Naive thymus-derived CD4-positive, alpha-beta T cell (primary cell): ENCODE measurements at regions of chr3 and their contacts with region 1.

Region 1: DNA sequence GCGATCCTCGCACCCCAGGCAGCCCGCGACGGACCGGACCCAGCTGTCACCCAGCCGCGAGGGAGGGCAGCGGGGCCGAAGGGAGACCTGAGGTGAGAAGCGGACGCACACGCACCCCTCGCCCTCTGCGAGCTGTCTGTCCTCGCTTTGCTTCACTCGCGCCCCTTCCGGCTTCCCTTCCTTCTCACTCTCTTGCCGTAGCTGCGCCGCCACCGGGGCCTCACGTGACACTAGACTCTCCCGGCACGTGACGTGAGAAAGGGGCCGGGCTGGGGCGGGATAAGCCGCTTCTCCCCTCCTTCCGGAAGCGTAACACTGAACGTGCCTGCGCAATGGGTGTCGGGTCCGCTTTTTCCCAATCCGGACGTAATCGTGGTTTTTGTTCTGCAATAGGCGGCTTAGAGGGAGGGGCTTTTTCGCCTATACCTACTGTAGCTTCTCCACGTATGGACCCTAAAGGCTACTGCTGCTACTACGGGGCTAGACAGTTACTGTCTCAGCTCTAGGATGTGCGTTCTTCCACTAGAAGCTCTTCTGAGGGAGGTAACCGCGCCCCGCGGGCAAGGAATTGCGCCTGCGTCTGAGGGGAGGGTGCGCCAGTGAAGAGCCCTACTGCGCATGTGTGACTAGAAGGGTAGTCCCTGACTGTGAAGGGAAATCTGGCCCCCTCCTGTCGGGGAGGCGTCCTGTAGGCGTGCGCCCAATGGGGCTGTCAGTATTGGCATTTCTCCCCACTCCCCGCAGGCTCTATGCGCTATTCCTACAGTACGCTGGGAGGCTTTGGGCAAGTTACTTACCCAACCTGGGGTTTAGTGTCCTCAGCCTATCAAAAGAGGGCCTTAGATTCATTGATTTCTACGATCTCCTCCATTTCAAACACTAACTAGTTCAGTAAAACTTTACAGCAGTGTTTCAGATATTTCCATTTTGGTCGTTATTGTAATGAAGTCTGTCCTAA is at the starts of genes ATG3 and SLC35A5:
- DNase-seq: peak; percentile 97 to 100 (median 99)
- ATAC-seq: peak; percentile 88
- H3K4me3 ChIP-seq: peak within 1 kb of the TSS; percentile 86
- H3K4me3 Mint-ChIP-seq: peak within 1 kb of the TSS; percentile 93 to 100 (median 98)
- H3K27ac ChIP-seq: peak within 1 kb of the TSS; percentile 91
- H3K27ac Mint-ChIP-seq: peak within 1 kb of the TSS; percentile 96 to 100 (median 99)
- H3K4me1 ChIP-seq: peaks cover 13 to 15% of the 10 kb centered on the region in 2 donors
- H3K4me1 Mint-ChIP-seq: peaks cover 25 to 73% (median 58%) of the 10 kb centered on the region in 7 donors
- H3K27me3 ChIP-seq: no peaks in the 10 kb centered on the region
- H3K27me3 Mint-ChIP-seq: no peaks in the 10 kb centered on the region
- total RNA-seq, gene ATG3: 35.1 to 65.8 (median 50.3) TPM
- total RNA-seq, gene SLC35A5: 10.4 to 24.6 (median 20.8) TPM

Region 2: GRCh38 chr3:111978493-111979433 is 583.2 kb before region 1 on chr3 and contains the start of gene ABHD10:
- CTCF ChIA-PET with region 1: no interaction called
- POLR2A ChIA-PET with region 1: no interaction called
- intact Hi-C with region 1: loop called (anchors 1 to 2 kb)
- DNase-seq: peak; percentile 90 to 97 (median 93)
- ATAC-seq: peak; percentile 95
- H3K4me3 ChIP-seq: peak within 1 kb of the TSS; percentile 83
- H3K4me3 Mint-ChIP-seq: peak within 1 kb of the TSS; percentile 82 to 97 (median 92)
- H3K27ac ChIP-seq: peak within 1 kb of the TSS; percentile 75
- H3K27ac Mint-ChIP-seq: peak within 1 kb of the TSS; percentile 92 to 96 (median 94)
- H3K4me1 ChIP-seq: peaks cover 16 to 24% of the 10 kb centered on the region in 2 donors
- H3K4me1 Mint-ChIP-seq: peaks cover 19 to 54% (median 44%) of the 10 kb centered on the region in 7 donors
- H3K27me3 ChIP-seq: no peaks in the 10 kb centered on the region
- H3K27me3 Mint-ChIP-seq: peaks cover 0 to 25% (median 0%) of the 10 kb centered on the region in 5 donors
- total RNA-seq, gene ABHD10: 18.4 to 43.6 (median 34.9) TPM

Region 3: DNA sequence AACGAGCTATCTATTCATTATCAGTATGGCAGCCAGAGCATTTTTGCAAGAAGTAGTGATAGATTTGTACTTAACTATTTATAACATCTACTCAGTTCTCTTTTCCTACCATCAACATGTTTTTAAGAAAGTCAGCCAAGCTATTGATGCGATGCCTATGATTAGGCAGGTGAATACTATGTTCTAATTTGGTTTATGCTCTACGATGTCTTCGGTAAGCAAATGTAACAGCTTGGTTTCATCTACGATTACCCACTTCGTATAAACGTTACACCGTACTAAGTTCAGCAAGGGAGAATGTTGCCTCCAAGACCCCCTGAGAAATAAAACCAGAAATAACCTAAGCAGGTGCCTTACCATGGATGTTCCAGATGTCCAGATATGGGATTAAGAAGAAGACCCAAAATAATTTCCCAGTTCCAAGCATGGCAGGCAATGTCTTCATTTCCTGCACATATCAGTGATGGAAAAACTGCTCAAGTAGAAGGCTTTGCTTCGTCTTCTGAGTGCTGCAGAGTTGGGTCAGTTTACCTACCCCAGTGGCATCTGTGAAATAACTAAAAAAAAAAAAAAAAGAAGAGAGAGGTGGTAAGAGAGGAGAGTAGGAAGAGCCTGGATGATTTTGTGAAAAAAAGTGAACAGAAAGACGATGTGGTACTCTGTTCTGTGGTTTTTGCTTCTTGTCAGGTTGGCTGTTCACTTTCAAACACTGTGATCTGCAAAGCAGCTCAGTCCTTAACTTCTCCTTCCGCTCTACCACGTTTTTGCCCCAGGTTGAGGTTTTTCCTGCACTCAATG is 62.9 kb before region 1 on chr3 and contains the start of gene BTLA:
- CTCF ChIA-PET with region 1: interaction called, 3 read pairs
- POLR2A ChIA-PET with region 1: interaction called, 3 read pairs
- intact Hi-C with region 1: loop called (anchors 2 kb)
- DNase-seq: peak in 7 of 9 donors; percentile 45 to 65 (median 50)
- ATAC-seq: peak; percentile 81
- H3K4me3 ChIP-seq: peak within 1 kb of the TSS; percentile 80
- H3K4me3 Mint-ChIP-seq: peak within 1 kb of the TSS; percentile 85 to 100 (median 97)
- H3K27ac ChIP-seq: peak within 1 kb of the TSS; percentile 68
- H3K27ac Mint-ChIP-seq: peak within 1 kb of the TSS; percentile 88 to 99 (median 94)
- H3K4me1 ChIP-seq: peaks cover 14 to 26% of the 10 kb centered on the region in 2 donors
- H3K4me1 Mint-ChIP-seq: peaks cover 34 to 63% (median 55%) of the 10 kb centered on the region in 7 donors
- H3K27me3 ChIP-seq: no peaks in the 10 kb centered on the region
- H3K27me3 Mint-ChIP-seq: no peaks in the 10 kb centered on the region
- total RNA-seq, gene BTLA: 15.6 to 29.5 (median 26.1) TPM

Region 4: DNA sequence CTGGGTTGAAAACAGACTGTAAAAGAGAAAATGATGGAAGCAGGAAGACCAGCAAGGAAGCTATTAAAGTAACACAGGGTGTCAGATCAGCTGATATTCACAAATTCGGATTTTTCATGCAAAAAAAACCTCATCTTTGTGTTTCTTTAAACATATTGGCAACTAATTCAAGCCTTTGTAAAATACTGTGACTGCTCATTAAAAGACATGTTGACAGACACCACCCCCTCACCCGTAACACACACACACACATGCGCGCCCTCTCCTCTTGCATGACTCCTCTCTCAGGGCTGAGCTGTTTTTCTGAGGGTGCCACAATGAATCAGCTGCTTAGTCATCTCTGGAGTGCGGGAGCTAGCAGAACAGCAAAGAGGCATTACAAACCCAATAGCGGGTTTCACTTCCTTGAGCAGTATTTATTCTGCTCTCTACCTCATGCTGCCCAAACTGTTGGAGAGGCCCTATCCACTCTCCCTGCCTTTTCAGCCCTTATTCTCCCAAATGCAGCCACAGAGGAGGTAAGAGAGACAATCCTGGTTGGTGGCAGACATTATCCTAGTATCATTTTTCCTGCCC is 114.7 kb after region 1 on chr3:
- CTCF ChIA-PET with region 1: no interaction called
- POLR2A ChIA-PET with region 1: no interaction called
- intact Hi-C with region 1: loop called in 1 of 2 experiments (anchors 1 kb)
- DNase-seq: peak in 7 of 9 donors; percentile 5 to 76 (median 30)
- ATAC-seq: peak; percentile 94
- H3K4me3 ChIP-seq: no peak overlapping the region
- H3K4me3 Mint-ChIP-seq: peak overlapping the region in 4 of 10 donors; percentile 11 to 80 (median 16)
- H3K27ac ChIP-seq: no peak overlapping the region
- H3K27ac Mint-ChIP-seq: peak overlapping the region in 5 of 9 donors; percentile 20 to 94 (median 24)
- H3K4me1 ChIP-seq: peaks cover 23 to 39% of the 10 kb centered on the region in 2 donors
- H3K4me1 Mint-ChIP-seq: peaks cover 30 to 69% (median 34%) of the 10 kb centered on the region in 7 donors
- H3K27me3 ChIP-seq: no peaks in the 10 kb centered on the region
- H3K27me3 Mint-ChIP-seq: no peaks in the 10 kb centered on the region

Region 5: GRCh38 chr3:112811131-112811884 is 249.3 kb after region 1 on chr3:
- CTCF ChIA-PET with region 1: no interaction called
- POLR2A ChIA-PET with region 1: no interaction called
- intact Hi-C with region 1: no loop called
- DNase-seq: no peak
- ATAC-seq: no peak
- H3K4me3 ChIP-seq: no peak overlapping the region
- H3K4me3 Mint-ChIP-seq: no peak overlapping the region
- H3K27ac ChIP-seq: no peak overlapping the region
- H3K27ac Mint-ChIP-seq: no peak overlapping the region
- H3K4me1 ChIP-seq: no peaks in the 10 kb centered on the region
- H3K4me1 Mint-ChIP-seq: peaks cover 20 to 35% (median 27%) of the 10 kb centered on the region in 7 donors
- H3K27me3 ChIP-seq: no peaks in the 10 kb centered on the region
- H3K27me3 Mint-ChIP-seq: peaks cover 0 to 3% (median 0%) of the 10 kb centered on the region in 5 donors

Region 6: DNA sequence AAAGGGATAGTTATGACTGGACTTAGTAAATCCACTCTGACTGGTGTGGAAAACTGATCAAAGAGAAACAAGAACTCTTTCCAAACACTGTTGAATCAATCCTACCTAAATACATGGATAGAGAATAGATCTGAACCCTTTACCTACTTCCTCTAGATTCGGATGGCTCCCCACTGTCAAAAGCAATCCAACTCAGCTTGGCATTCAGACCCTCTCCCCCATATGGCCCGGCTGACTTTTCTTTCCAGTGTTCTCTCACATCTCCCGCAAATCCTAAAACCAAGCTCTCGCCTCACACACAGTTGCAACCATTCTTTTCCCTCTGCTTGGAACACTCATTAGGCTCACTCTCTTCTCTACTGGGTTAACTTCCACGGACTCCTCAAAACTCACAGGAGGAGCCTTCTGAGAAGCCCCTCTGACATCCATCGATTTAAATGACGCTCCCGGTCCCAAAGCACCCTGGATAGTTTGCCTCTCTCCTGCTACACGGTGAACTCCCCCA is 952.3 kb after region 1 on chr3:
- CTCF ChIA-PET with region 1: no interaction called
- POLR2A ChIA-PET with region 1: interaction called, 3 read pairs
- intact Hi-C with region 1: loop called in 1 of 2 experiments (anchors 1 kb)
- DNase-seq: no peak
- ATAC-seq: no peak
- H3K4me3 ChIP-seq: peak overlapping the region; percentile 99
- H3K4me3 Mint-ChIP-seq: no peak overlapping the region
- H3K27ac ChIP-seq: peak overlapping the region; percentile 87
- H3K27ac Mint-ChIP-seq: no peak overlapping the region
- H3K4me1 ChIP-seq: peaks cover 7 to 8% of the 10 kb centered on the region in 2 donors
- H3K4me1 Mint-ChIP-seq: peaks cover 6 to 30% (median 27%) of the 10 kb centered on the region in 7 donors
- H3K27me3 ChIP-seq: no peaks in the 10 kb centered on the region
- H3K27me3 Mint-ChIP-seq: peaks cover 10 to 29% (median 15%) of the 10 kb centered on the region in 5 donors

Region 7: GRCh38 chr3:114213627-114214541 is 1651.9 kb after region 1 on chr3:
- CTCF ChIA-PET with region 1: no interaction called
- POLR2A ChIA-PET with region 1: no interaction called
- intact Hi-C with region 1: loop called (anchors 2 to 5 kb)
- DNase-seq: peak; percentile 33 to 83 (median 71)
- ATAC-seq: peak; percentile 61
- H3K4me3 ChIP-seq: peak overlapping the region; percentile 50
- H3K4me3 Mint-ChIP-seq: no peak overlapping the region
- H3K27ac ChIP-seq: peak overlapping the region; percentile 90
- H3K27ac Mint-ChIP-seq: no peak overlapping the region
- H3K4me1 ChIP-seq: peaks cover 43 to 65% of the 10 kb centered on the region in 2 donors
- H3K4me1 Mint-ChIP-seq: peaks cover 0 to 26% (median 3%) of the 10 kb centered on the region in 7 donors
- H3K27me3 ChIP-seq: no peaks in the 10 kb centered on the region
- H3K27me3 Mint-ChIP-seq: no peaks in the 10 kb centered on the region